ENCODE measurements at regions of chr12 and their contacts with region 1.

Region 1: GRCh38 chr12:27821259-27821973 is 41.4 kb upstream of the MANSC4 start:
- DNase-seq: peak; percentile 89
- H3K4me3 Mint-ChIP-seq: peak overlapping the region; percentile 64
- H3K27ac Mint-ChIP-seq: peak overlapping the region; percentile 89
- H3K4me1 Mint-ChIP-seq: peaks cover 5% of the 10 kb centered on the region
- H3K27me3 Mint-ChIP-seq: no peaks in the 10 kb centered on the region
- CTCF ChIP-seq: peak; percentile 80

Region 2: DNA sequence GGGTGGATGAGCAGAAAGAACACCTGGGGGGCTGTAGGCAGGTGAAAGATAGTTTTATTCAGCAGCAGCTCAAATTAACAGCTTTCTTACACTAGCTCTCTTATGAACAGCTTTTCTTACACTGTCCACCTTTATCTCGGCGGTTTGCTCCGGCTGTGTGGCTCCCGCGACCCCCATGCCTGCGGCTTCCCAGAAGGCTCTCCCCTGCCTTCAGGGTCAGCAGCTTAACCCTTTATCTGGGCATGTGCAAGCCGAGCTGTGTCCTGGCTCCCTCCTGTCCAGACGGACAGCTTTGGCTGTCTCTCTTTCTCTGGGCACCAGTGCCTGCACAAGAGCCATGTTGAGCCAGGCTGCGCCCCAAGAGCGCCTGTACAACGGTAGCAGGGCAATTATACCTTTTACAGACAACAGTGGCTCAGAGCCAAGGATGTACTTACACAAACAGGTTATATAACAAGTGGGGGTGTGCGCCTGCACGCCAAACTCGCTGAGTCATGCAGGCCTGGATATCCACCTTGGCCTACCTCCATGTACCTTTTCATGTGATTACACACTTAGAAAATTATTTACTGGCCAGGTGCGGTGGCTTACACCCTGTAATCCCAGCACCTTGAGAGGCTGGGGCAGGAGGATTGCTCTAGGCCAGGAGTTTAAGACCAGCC is 69.9 kb before region 1 on chr12:
- CTCF ChIA-PET with region 1: interaction called, 7 read pairs
- POLR2A ChIA-PET with region 1: interaction called, 23 read pairs
- intact Hi-C with region 1: no loop called
- DNase-seq: peak; percentile 88
- H3K4me3 Mint-ChIP-seq: no peak overlapping the region
- H3K27ac Mint-ChIP-seq: peak overlapping the region; percentile 74
- H3K4me1 Mint-ChIP-seq: peaks cover 23% of the 10 kb centered on the region
- H3K27me3 Mint-ChIP-seq: no peaks in the 10 kb centered on the region
- CTCF ChIP-seq: no peak

Region 3: GRCh38 chr12:27779920-27780611 is 41.4 kb before region 1 on chr12 and contains the starts of genes KLHL42 and MANSC4:
- CTCF ChIA-PET with region 1: interaction called, 6 read pairs
- POLR2A ChIA-PET with region 1: interaction called, 19 read pairs
- intact Hi-C with region 1: loop called (anchors 2 kb)
- DNase-seq: peak; percentile 67
- H3K4me3 Mint-ChIP-seq: peak within 1 kb of the TSS; percentile 77
- H3K27ac Mint-ChIP-seq: peak within 1 kb of the TSS; percentile 63
- H3K4me1 Mint-ChIP-seq: peaks cover 21% of the 10 kb centered on the region
- H3K27me3 Mint-ChIP-seq: no peaks in the 10 kb centered on the region
- CTCF ChIP-seq: no peak
- total RNA-seq, gene KLHL42: 32.5 and 37.6 TPM in 2 replicates
- total RNA-seq, gene MANSC4: not detected in 2 replicates

Region 4: DNA sequence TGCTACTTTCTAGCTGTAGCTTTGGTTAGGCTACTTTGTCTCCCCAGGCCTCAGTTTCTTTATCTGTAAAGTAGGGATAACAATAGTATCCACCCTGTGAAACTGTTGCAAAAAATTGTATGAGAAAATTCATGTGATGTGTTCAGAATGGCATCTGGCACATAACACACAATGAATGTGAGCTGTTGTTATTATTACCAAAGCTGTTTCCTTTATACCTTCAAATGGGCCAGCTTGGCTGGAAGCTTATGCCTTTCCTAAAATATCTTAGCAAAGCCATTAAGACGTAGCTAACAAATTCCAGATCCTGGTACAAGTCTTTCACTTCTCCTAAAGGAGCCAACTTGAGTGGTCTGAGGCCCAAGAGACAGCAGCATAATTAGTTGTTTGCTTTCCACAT is 16.2 kb before region 1 on chr12:
- CTCF ChIA-PET with region 1: interaction called, 11 read pairs
- POLR2A ChIA-PET with region 1: interaction called, 6 read pairs
- intact Hi-C with region 1: no loop called
- DNase-seq: no peak
- H3K4me3 Mint-ChIP-seq: no peak overlapping the region
- H3K27ac Mint-ChIP-seq: no peak overlapping the region
- H3K4me1 Mint-ChIP-seq: no peaks in the 10 kb centered on the region
- H3K27me3 Mint-ChIP-seq: no peaks in the 10 kb centered on the region
- CTCF ChIP-seq: no peak

Region 5: GRCh38 chr12:27810756-27811155 is 10.7 kb before region 1 on chr12:
- CTCF ChIA-PET with region 1: interaction called, 13 read pairs
- POLR2A ChIA-PET with region 1: interaction called, 6 read pairs
- intact Hi-C with region 1: no loop called
- DNase-seq: no peak
- H3K4me3 Mint-ChIP-seq: no peak overlapping the region
- H3K27ac Mint-ChIP-seq: no peak overlapping the region
- H3K4me1 Mint-ChIP-seq: peaks cover 12% of the 10 kb centered on the region
- H3K27me3 Mint-ChIP-seq: no peaks in the 10 kb centered on the region
- CTCF ChIP-seq: no peak

Region 6: DNA sequence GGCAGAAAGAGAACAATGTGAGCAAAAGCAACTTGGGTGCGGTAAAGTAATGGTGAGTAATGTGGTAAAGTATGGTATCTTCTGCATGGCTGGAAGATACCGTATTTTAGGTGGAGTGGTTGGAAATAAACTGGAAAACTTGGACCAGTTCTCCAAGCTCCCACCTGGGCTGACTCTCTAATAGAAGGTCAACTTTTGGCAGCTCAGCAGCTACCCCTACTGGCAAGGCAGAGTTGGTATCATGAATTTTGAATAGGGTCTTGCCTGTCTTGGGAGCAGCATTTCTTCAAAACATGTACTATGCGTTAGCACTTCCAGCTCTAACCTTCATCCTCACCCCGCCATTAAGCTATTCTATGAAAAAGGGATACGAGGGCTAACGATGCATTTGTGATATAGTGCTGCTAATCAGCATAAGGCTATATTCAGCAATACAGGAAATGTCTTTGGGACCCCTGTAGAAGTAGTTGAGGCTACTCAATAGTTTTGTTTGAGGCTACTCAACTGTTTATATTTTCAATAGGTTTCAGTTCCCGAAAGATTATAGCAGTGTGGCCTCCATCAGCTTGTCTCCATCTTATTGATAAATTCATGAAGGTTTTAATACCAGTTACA is 1051.3 kb after region 1 on chr12:
- CTCF ChIA-PET with region 1: interaction called, 4 read pairs
- POLR2A ChIA-PET with region 1: no interaction called
- intact Hi-C with region 1: loop called (anchors 10 kb)
- DNase-seq: peak; percentile 69
- H3K4me3 Mint-ChIP-seq: no peak overlapping the region
- H3K27ac Mint-ChIP-seq: no peak overlapping the region
- H3K4me1 Mint-ChIP-seq: peaks cover 21% of the 10 kb centered on the region
- H3K27me3 Mint-ChIP-seq: no peaks in the 10 kb centered on the region
- CTCF ChIP-seq: peak; percentile 77

Measured in MCF 10A (cell line).